ENCODE measurements at regions of chr10 and their contacts with region 1.

Region 1: DNA sequence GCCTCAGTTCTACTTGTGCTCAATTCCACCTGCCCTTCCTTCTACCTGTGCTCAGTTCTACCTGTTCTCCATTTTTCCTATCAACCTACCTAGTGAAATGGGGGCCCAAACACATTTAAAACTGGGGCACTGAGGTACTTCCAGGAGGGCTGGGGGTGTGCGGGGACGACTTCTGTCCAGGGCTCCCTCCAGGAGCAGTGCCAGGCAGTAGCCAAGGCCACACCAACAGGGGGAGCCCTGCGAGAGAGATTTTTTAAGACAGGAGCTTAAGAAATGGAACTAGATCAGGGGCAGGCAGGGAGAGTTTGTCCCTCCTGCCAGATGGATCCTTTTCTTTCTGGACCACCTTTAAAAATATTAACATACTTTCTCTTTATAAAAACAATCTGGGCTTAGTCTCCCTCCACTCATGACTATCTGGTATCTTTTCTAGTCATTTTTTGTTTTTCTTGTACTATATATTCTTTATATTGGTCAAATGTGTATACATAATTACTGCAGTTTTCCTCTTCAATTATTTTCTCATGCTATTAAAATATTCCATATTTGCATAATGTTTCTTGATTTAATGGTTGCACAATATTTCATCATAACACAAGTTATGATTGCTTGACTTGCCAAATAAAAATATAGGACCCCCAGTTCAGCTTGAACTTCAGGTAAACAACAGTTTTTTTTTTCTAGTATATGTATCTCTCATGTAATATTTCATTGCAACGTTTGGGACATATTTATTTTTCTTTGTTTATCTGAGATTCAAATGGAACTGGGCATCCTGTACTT is 47.3 kb upstream of the INSYN2A start:
- DNase-seq: peak; percentile 51 to 66
- H3K4me3 ChIP-seq: no peak overlapping the region
- H3K4me3 Mint-ChIP-seq: no peak overlapping the region
- H3K27ac Mint-ChIP-seq: no peak overlapping the region
- H3K4me1 ChIP-seq: no peaks in the 10 kb centered on the region
- H3K4me1 Mint-ChIP-seq: no peaks in the 10 kb centered on the region
- H3K27me3 ChIP-seq: no peaks in the 10 kb centered on the region
- H3K27me3 Mint-ChIP-seq: no peaks in the 10 kb centered on the region
- CTCF ChIP-seq: peak; percentile 72 to 82

Region 2: GRCh38 chr10:127354992-127355391 is 111.3 kb after region 1 on chr10:
- CTCF ChIA-PET with region 1: no interaction called
- POLR2A ChIA-PET with region 1: no interaction called
- intact Hi-C with region 1: loop called (anchors 5 kb)
- DNase-seq: no peak
- H3K4me3 ChIP-seq: no peak overlapping the region
- H3K4me3 Mint-ChIP-seq: no peak overlapping the region
- H3K27ac Mint-ChIP-seq: no peak overlapping the region
- H3K4me1 ChIP-seq: no peaks in the 10 kb centered on the region
- H3K4me1 Mint-ChIP-seq: no peaks in the 10 kb centered on the region
- H3K27me3 ChIP-seq: no peaks in the 10 kb centered on the region
- H3K27me3 Mint-ChIP-seq: no peaks in the 10 kb centered on the region
- CTCF ChIP-seq: peak in 1 of 2 experiments; percentile 9

Measured in Caco-2 (cell line).